Activated T-helper 1 cell treated with anti-CD3 and anti-CD28 coated beads, Interleukin-12 subunit alpha, Interleukin-12 subunit beta, Interleukin-2, Interleukin-4 antibody, amounts not matched to agents 30 ng/mL and 10 ng/mL and 1 ng/mL, durations not matched to agents 14 hours and 24 hours and 36 hours (primary cell): ENCODE measurements at regions of chr1 and their contacts with region 1.

Region 1: GRCh38 chr1:169928438-169929209 is 34.9 kb upstream of the SCYL3 start:
- DNase-seq: no peak
- H3K4me3 Mint-ChIP-seq: no peak overlapping the region
- H3K27ac Mint-ChIP-seq: no peak overlapping the region
- H3K4me1 Mint-ChIP-seq: peaks cover 6% of the 10 kb centered on the region
- H3K27me3 Mint-ChIP-seq: no peaks in the 10 kb centered on the region

Region 2: DNA sequence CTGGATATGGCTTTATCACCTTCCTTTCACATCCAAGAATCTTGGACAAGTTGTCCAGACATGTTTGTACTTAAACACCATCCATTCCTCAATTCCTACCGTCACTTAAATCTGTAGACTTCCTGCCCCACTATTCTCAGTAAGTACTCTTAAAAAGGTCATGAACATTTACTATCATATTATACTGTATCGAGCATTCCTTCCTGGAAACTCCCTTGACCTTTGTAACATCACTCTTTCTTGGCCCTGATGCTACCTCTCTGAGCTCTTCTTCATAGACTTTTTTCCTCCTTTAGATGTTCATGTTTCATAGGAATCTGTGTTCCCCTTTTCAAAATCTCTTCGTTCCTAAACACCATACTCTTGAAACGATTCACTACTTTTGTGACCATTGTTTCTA is 545.2 kb before region 1 on chr1:
- intact Hi-C with region 1: no loop called
- DNase-seq: no peak
- H3K4me3 Mint-ChIP-seq: no peak overlapping the region
- H3K27ac Mint-ChIP-seq: no peak overlapping the region
- H3K4me1 Mint-ChIP-seq: no peaks in the 10 kb centered on the region
- H3K27me3 Mint-ChIP-seq: no peaks in the 10 kb centered on the region

Region 3: GRCh38 chr1:169893494-169894362 is 34.9 kb before region 1 on chr1 and contains the start of gene SCYL3:
- intact Hi-C with region 1: loop called (anchors 1 kb)
- DNase-seq: peak; percentile 86
- H3K4me3 Mint-ChIP-seq: peak within 1 kb of the TSS; percentile 86
- H3K27ac Mint-ChIP-seq: peak within 1 kb of the TSS; percentile 100
- H3K4me1 Mint-ChIP-seq: peaks cover 51% of the 10 kb centered on the region
- H3K27me3 Mint-ChIP-seq: peaks cover 12% of the 10 kb centered on the region
- total RNA-seq, gene SCYL3: 11.8 and 12.3 TPM in 2 replicates

Region 4: GRCh38 chr1:170461762-170462384 is 533.2 kb after region 1 on chr1:
- intact Hi-C with region 1: loop called (anchors 5 kb)
- DNase-seq: no peak
- H3K4me3 Mint-ChIP-seq: no peak overlapping the region
- H3K27ac Mint-ChIP-seq: no peak overlapping the region
- H3K4me1 Mint-ChIP-seq: no peaks in the 10 kb centered on the region
- H3K27me3 Mint-ChIP-seq: no peaks in the 10 kb centered on the region

Region 5: GRCh38 chr1:170670802-170671628 is 742.4 kb after region 1 on chr1:
- intact Hi-C with region 1: loop called (anchors 5 kb)
- DNase-seq: no peak
- H3K4me3 Mint-ChIP-seq: no peak overlapping the region
- H3K27ac Mint-ChIP-seq: no peak overlapping the region
- H3K4me1 Mint-ChIP-seq: no peaks in the 10 kb centered on the region
- H3K27me3 Mint-ChIP-seq: peaks cover 62% of the 10 kb centered on the region

Region 6: DNA sequence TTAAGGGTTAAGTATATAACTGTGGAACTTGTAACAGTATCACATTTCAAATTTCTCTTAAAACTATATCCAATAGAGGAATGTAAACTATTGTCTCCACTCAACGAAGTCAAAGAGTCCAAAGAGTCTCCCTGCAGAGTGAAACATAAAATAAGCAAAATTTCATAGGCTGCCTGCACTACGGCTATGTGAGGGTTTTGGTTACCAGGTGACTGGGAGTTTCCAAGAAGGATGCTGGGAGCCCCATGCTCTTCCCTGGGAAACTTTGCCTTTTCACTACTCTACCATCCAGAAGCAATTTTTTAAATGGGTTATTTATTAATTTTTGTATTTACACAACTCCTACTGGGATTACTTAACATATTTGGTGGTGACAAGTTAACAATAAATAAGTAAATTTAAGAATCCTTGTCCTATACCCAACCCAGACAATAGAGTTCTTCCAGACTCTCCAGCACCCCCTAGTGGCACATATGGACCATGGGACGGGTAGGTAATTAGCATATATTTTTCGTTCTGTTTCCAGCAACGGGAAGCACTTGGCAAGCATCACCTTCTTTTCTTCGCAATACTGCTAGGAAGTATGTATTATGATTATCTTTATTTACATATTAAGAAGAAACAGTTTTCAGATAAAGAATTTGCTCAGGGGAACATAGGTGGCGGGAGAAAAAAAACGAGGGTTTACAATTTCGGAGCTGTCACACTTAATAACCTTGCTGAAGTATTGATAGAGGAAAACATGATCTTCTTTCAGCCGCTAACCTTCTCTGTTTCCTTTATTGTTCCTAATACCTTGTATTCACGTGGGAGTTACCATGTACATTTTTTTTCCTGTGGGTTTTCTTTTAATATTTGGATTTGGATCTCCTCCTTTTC is 1260.0 kb after region 1 on chr1:
- intact Hi-C with region 1: loop called (anchors 1 kb)
- DNase-seq: no peak
- H3K4me3 Mint-ChIP-seq: no peak overlapping the region
- H3K27ac Mint-ChIP-seq: no peak overlapping the region
- H3K4me1 Mint-ChIP-seq: no peaks in the 10 kb centered on the region
- H3K27me3 Mint-ChIP-seq: peaks cover 11% of the 10 kb centered on the region

Region 7: DNA sequence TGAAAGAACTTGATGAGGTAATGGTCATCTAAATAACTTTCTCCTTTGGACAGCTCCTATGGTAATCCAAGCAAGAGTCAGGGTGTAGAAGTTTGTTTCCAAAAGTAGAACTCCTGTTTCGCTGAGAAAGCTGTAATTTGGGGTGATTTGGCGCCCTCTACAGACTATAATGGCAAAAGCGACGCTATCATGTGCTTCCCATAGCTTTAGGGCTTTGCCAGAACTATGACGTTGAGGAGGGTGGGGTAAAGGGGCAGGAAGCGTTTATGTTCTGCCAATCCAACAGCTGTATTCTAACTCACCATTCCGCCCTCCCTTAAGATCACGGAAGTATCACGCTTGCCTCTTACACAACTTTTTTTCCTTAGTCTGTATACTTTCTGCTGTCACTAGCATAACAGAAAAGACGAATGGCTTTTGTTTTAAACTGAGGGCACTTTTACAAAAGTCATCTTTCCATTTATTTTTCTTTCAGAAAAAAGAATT is 1385.3 kb after region 1 on chr1 and contains the start of gene FMO4:
- intact Hi-C with region 1: loop called (anchors 10 kb)
- DNase-seq: peak; percentile 79
- H3K4me3 Mint-ChIP-seq: peak within 1 kb of the TSS; percentile 72
- H3K27ac Mint-ChIP-seq: peak within 1 kb of the TSS; percentile 54
- H3K4me1 Mint-ChIP-seq: peaks cover 15% of the 10 kb centered on the region
- H3K27me3 Mint-ChIP-seq: no peaks in the 10 kb centered on the region
- total RNA-seq, gene FMO4: 0.39 and 1.5 TPM in 2 replicates